Activated CD4-positive, alpha-beta T cell treated with anti-CD3 and anti-CD28 coated beads, Interleukin-2, amount 10 ng/mL, durations not matched to agents 7 days and 5 days (primary cell): ENCODE measurements at regions of chr12 and their contacts with region 1.

Region 1: GRCh38 chr12:95998611-95999286 is 2.6 kb upstream of the HAL start:
- DNase-seq: peak; percentile 71
- H3K4me3 Mint-ChIP-seq: no peak overlapping the region
- H3K27ac Mint-ChIP-seq: no peak overlapping the region
- H3K4me1 Mint-ChIP-seq: peaks cover 11% of the 10 kb centered on the region
- H3K27me3 Mint-ChIP-seq: no peaks in the 10 kb centered on the region

Region 2: DNA sequence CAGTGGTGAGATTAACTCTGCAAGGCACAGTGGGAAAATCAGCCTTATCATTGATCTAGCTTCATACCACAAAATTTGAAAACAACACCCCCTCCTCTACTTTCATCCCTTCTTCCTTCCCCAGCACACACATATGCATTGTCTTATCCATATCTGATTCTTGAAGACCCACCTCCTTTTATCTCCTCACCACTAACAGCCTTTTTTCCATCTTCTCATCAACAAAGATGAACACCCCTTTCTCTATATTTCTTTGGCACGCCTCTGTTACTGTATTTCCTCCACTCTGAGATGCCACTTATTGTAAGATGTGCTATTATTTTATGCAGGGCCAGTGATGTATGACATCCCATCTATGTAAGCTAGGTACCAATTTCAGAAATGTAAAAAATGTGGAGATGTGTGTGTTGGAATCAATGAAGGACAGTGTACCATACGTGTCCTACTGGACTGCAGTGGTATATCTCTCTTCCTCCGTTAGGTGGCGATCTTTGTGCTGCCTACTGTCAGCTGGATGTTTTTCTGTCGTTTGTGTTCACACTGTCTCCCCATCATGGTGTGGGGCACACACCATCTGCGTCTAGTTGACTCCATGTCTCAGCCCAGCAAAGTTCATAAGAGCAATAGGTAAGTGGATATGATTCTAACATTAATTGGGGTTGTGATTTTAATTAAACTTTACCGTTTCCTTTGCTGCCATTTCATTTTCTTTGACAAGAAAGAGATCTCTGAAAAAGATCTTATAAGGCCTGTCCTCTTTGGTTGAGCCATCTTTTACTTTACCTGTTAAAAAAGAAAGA is 80.4 kb before region 1 on chr12:
- CTCF ChIA-PET with region 1: interaction called, 15 read pairs
- POLR2A ChIA-PET with region 1: no interaction called
- DNase-seq: peak; percentile 63
- H3K4me3 Mint-ChIP-seq: no peak overlapping the region
- H3K27ac Mint-ChIP-seq: no peak overlapping the region
- H3K4me1 Mint-ChIP-seq: no peaks in the 10 kb centered on the region
- H3K27me3 Mint-ChIP-seq: peaks cover 20% of the 10 kb centered on the region

Region 3: GRCh38 chr12:95942524-95943329 is 56.0 kb before region 1 on chr12 and contains the start of gene CCDC38:
- CTCF ChIA-PET with region 1: interaction called, 12 read pairs
- POLR2A ChIA-PET with region 1: no interaction called
- DNase-seq: peak; percentile 89
- H3K4me3 Mint-ChIP-seq: peak within 1 kb of the TSS; percentile 94
- H3K27ac Mint-ChIP-seq: peak within 1 kb of the TSS; percentile 91
- H3K4me1 Mint-ChIP-seq: peaks cover 10% of the 10 kb centered on the region
- H3K27me3 Mint-ChIP-seq: peaks cover 8% of the 10 kb centered on the region
- total RNA-seq, gene CCDC38: not detected

Region 4: GRCh38 chr12:96015672-96016071 is 16.9 kb after region 1 on chr12:
- CTCF ChIA-PET with region 1: interaction called, 10 read pairs
- POLR2A ChIA-PET with region 1: no interaction called
- DNase-seq: no peak
- H3K4me3 Mint-ChIP-seq: no peak overlapping the region
- H3K27ac Mint-ChIP-seq: no peak overlapping the region
- H3K4me1 Mint-ChIP-seq: no peaks in the 10 kb centered on the region
- H3K27me3 Mint-ChIP-seq: no peaks in the 10 kb centered on the region